ENCODE measurements at regions of chr7 and their contacts with region 1.

Region 1: DNA sequence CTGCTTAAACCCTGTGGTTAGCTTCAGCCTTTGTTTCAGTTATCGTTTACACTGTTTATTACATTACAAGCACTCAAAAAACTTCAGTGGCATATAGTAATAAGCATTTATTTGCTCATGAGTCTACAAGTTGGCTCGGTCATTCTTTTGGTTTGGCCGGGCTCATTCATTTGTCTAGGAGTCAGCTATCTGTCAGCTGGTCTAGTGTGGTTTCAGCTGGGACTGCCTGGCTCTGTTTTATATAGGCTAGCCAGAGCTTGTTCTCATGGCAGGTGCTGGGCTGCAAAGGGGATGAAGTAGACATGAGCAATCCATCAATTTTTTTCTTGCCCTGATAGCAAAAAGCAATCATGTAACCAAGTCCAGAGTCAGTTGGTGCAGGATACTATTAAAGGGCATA is 103.6 kb downstream of the MKLN1 start:
- DNase-seq: peak; percentile 96
- H3K4me3 ChIP-seq: no peak overlapping the region
- H3K27ac ChIP-seq: no peak overlapping the region
- H3K4me1 ChIP-seq: peaks cover 16% of the 10 kb centered on the region
- H3K27me3 ChIP-seq: no peaks in the 10 kb centered on the region
- CTCF ChIP-seq: no peak

Region 2: GRCh38 chr7:131327626-131328376 is 103.5 kb before region 1 on chr7 and contains the start of gene MKLN1:
- CTCF ChIA-PET with region 1: no interaction called
- dilution Hi-C with region 1: no loop called
- in situ Hi-C with region 1: no loop called
- intact Hi-C with region 1: loop called (anchors 10 kb)
- DNase-seq: peak; percentile 83
- H3K4me3 ChIP-seq: peak within 1 kb of the TSS; percentile 93 to 96 (median 95)
- H3K27ac ChIP-seq: peak within 1 kb of the TSS; percentile 88
- H3K4me1 ChIP-seq: peaks cover 22% of the 10 kb centered on the region
- H3K27me3 ChIP-seq: no peaks in the 10 kb centered on the region
- CTCF ChIP-seq: no peak
- total RNA-seq, gene MKLN1: 33.9 to 38.0 TPM

Region 3: GRCh38 chr7:131642429-131642828 is 211.1 kb after region 1 on chr7:
- CTCF ChIA-PET with region 1: no interaction called
- dilution Hi-C with region 1: no loop called
- in situ Hi-C with region 1: no loop called
- intact Hi-C with region 1: no loop called
- DNase-seq: no peak
- H3K4me3 ChIP-seq: no peak overlapping the region
- H3K27ac ChIP-seq: no peak overlapping the region
- H3K4me1 ChIP-seq: no peaks in the 10 kb centered on the region
- H3K27me3 ChIP-seq: no peaks in the 10 kb centered on the region
- CTCF ChIP-seq: no peak